ENCODE measurements at regions of chr20 and their contacts with region 1.

Region 1: DNA sequence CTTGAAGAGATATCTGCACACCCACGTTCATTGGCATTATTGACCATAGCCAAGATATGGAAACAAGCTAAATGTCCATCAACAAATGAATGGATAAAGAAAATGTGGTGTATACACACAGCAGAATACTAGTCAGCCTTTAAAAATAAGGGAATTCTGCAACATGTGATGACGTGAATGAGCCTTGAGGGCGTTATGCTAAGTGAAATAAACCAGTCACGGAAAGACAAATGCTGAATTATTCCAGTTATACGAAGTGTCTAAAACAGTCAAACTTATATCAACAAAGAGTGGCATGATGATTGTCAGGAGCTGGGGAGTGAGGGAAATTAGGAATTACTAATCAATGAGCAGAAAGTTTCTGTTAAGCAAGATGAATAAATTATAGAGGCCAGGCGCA is 8.4 kb upstream of the DEFB121 start:
- DNase-seq: no peak
- ATAC-seq: no peak
- H3K4me3 ChIP-seq: no peak overlapping the region
- H3K27ac ChIP-seq: no peak overlapping the region
- H3K4me1 ChIP-seq: no peaks in the 10 kb centered on the region
- CTCF ChIP-seq: no peak
- EP300 ChIP-seq: no peak
- POLR2A ChIP-seq: no peak
- RAD21 ChIP-seq: no peak

Region 2: GRCh38 chr20:31374346-31374745 is 40.0 kb before region 1 on chr20:
- CTCF ChIA-PET with region 1: no interaction called
- POLR2A ChIA-PET with region 1: no interaction called
- DNase-seq: no peak
- ATAC-seq: no peak
- H3K4me3 ChIP-seq: no peak overlapping the region
- H3K27ac ChIP-seq: no peak overlapping the region
- H3K4me1 ChIP-seq: no peaks in the 10 kb centered on the region
- CTCF ChIP-seq: no peak
- EP300 ChIP-seq: no peak
- POLR2A ChIP-seq: no peak
- RAD21 ChIP-seq: no peak

Region 3: GRCh38 chr20:31425797-31426196 is 11.4 kb after region 1 on chr20:
- CTCF ChIA-PET with region 1: interaction called, 20 read pairs
- POLR2A ChIA-PET with region 1: no interaction called
- DNase-seq: no peak
- ATAC-seq: no peak
- H3K4me3 ChIP-seq: no peak overlapping the region
- H3K27ac ChIP-seq: no peak overlapping the region
- H3K4me1 ChIP-seq: no peaks in the 10 kb centered on the region
- CTCF ChIP-seq: no peak
- EP300 ChIP-seq: no peak
- POLR2A ChIP-seq: no peak
- RAD21 ChIP-seq: no peak

Region 4: DNA sequence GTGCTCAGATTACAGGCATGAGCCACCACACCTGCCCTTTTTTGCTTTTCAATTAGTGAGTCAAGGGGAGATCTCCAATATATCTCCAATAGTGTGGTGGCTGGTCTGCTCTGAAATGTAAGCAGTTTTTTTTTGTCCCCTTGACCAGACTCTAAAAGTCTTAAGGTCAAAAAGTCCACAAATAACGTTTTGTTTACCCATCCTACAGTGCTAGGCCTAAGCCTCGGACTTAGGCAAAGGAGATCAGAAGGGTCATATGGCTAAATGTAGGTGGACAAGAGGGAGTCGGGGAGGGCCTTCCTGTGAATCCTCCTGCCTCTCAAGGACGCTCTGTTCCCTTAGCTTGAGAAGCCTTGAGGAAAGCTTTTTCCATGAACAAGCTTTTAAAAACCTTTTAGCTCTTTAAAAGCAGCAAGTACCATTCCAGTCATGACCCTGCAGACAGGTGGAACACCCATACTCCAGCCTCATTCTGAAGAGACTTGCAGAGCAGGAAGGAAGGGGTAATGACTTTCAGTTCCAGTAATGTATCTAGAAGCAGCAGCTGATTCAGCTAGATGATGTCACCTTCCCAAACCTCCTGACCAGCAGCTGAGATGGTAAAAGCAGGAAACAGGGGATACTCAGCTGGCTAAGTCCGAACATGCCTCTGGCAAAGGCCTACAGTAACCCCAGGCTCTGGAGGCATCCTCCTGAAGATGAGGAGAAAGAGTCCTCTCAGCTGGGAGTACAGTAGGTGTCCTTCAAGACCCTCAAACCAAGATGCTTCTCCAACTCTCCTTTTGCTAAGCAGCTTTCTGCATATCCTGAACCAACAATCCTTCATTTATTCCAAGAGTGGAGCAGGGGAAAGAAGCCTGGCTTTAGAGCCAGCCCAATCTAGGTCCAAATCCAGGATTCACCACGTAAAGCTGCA is 284.7 kb after region 1 on chr20:
- CTCF ChIA-PET with region 1: no interaction called
- POLR2A ChIA-PET with region 1: no interaction called
- DNase-seq: peak; percentile 63 to 87
- ATAC-seq: peak; percentile 59 to 74
- H3K4me3 ChIP-seq: no peak overlapping the region
- H3K27ac ChIP-seq: peak overlapping the region; percentile 89 to 95
- H3K4me1 ChIP-seq: peaks cover 100% of the 10 kb centered on the region
- CTCF ChIP-seq: no peak
- EP300 ChIP-seq: peak; percentile 39 to 58; a peak in 2 of 5 replicates
- POLR2A ChIP-seq: no peak
- RAD21 ChIP-seq: no peak